ENCODE measurements at regions of chr5 and their contacts with region 1.

Region 1: DNA sequence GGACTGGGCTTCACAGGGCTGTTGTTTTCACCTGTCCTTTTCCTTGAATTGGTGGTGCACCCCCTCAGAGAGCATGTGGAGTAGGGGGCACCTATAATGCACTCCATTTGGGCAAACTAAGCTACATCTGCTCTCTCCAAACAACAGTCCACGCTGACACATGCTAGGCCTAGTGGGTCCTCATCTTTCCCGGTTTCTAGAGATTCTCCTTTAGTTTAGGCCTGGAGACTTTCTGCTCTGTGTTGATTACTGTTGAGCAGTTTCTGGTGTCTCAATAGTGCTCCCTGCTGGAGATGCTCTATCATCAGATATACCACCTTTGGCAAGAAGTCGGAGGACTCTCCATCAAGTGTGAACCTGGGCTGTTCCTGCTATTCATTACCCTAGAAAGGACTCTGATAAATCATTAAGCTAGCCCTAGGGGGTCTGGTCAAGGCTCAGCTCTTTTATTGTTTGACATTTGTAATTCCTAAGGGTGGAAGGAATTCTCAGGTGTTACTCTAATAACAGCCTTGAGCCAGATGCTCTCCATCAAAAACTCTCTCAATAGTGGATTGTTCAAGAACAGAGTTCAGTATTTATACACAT is 64.0 kb upstream of the FYB1 start:
- DNase-seq: peak in 1 of 3 donors; percentile 82
- ATAC-seq: peak; percentile 97
- H3K4me3 ChIP-seq: no peak overlapping the region
- H3K4me1 ChIP-seq: peaks cover 2% of the 10 kb centered on the region
- CTCF ChIP-seq: peak; percentile 37

Region 2: GRCh38 chr5:39217365-39218281 is 65.7 kb before region 1 on chr5:
- intact Hi-C with region 1: loop called in 1 of 2 experiments (anchors 2 kb)
- DNase-seq: peak; percentile 57 to 93 (median 58)
- ATAC-seq: peak; percentile 92
- H3K4me3 ChIP-seq: no peak overlapping the region
- H3K4me1 ChIP-seq: no peaks in the 10 kb centered on the region
- CTCF ChIP-seq: peak; percentile 95

Region 3: GRCh38 chr5:39238366-39239105 is 44.8 kb before region 1 on chr5:
- intact Hi-C with region 1: no loop called
- DNase-seq: no peak
- ATAC-seq: no peak
- H3K4me3 ChIP-seq: no peak overlapping the region
- H3K4me1 ChIP-seq: no peaks in the 10 kb centered on the region
- CTCF ChIP-seq: no peak